IMR-90 (cell line): ENCODE measurements at regions of chr12 and their contacts with region 1.

Region 1: GRCh38 chr12:78470354-78471195 is 394.0 kb upstream of the SYT1 start:
- DNase-seq: peak; percentile 60
- ATAC-seq: peak; percentile 74
- H3K4me3 ChIP-seq: no peak overlapping the region
- H3K27ac ChIP-seq: no peak overlapping the region
- H3K4me1 ChIP-seq: no peaks in the 10 kb centered on the region
- H3K27me3 ChIP-seq: no peaks in the 10 kb centered on the region
- CTCF ChIP-seq: peak; percentile 70
- POLR2A ChIP-seq: no peak
- RAD21 ChIP-seq: peak; percentile 70

Region 2: DNA sequence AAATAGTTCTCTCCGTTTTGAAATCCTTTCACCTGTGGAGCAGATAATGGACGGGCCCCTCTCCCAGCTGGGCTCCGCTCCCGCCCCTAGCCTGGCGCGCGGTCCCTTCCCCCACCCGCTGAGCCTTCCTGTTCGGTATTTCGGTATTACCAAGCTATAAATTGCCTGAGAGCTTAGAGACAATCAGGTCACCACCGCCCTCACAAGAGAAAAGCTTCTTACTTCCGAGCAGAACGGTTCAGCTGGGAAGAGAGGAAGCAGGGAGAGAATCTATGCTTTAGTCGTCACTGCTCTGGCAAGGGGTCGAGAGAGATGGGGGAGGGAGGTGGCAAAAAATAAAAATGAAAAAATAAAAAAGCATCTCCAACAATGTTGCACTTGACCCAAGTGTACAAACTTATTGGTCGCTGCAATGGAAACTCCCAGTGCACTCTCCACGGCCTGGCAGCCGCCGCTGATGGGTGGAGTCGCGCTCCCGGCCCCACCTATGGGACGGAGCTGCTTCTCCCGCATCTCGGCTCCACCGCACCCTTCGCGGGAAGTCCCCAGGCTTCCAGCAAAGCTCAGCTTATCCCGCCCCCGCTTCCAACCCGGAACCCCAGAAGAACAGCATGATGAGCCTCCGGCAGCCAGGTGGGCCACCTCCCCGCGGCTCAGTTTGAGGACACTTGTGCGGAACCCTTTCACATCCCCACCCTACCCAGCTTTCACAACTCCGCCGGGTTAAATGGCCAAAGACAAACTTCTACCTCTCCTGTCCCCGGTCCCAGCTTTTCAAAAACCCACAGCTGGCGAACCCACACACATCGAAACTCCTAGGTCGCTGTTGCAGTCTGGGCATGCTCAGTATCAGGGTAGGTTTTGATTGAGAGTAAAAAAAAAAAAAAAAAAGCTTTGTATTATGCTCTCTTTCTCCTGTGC is 393.2 kb after region 1 on chr12:
- CTCF ChIA-PET with region 1: no interaction called
- POLR2A ChIA-PET with region 1: no interaction called
- dilution Hi-C with region 1: no loop called
- in situ Hi-C with region 1: no loop called
- intact Hi-C with region 1: loop called (anchors 5 kb)
- DNase-seq: peak; percentile 39
- ATAC-seq: peak; percentile 63
- H3K4me3 ChIP-seq: peak overlapping the region; percentile 57
- H3K27ac ChIP-seq: peak overlapping the region; percentile 5; the same call in 1 of the 2 replicates
- H3K4me1 ChIP-seq: no peaks in the 10 kb centered on the region
- H3K27me3 ChIP-seq: no peaks in the 10 kb centered on the region; the same call in 1 of the 2 replicates
- CTCF ChIP-seq: no peak
- POLR2A ChIP-seq: no peak
- RAD21 ChIP-seq: no peak

Region 3: GRCh38 chr12:79006306-79006705 is 535.7 kb after region 1 on chr12:
- CTCF ChIA-PET with region 1: no interaction called
- POLR2A ChIA-PET with region 1: no interaction called
- dilution Hi-C with region 1: no loop called
- in situ Hi-C with region 1: no loop called
- intact Hi-C with region 1: loop called (anchors 5 kb)
- DNase-seq: peak; percentile 21
- ATAC-seq: no peak
- H3K4me3 ChIP-seq: no peak overlapping the region
- H3K27ac ChIP-seq: no peak overlapping the region
- H3K4me1 ChIP-seq: no peaks in the 10 kb centered on the region
- H3K27me3 ChIP-seq: no peaks in the 10 kb centered on the region
- CTCF ChIP-seq: peak; percentile 51
- POLR2A ChIP-seq: no peak
- RAD21 ChIP-seq: peak; percentile 63

Region 4: GRCh38 chr12:79344855-79345847 is 874.6 kb after region 1 on chr12:
- CTCF ChIA-PET with region 1: no interaction called
- POLR2A ChIA-PET with region 1: no interaction called
- dilution Hi-C with region 1: no loop called
- in situ Hi-C with region 1: no loop called
- intact Hi-C with region 1: loop called (anchors 2 kb)
- DNase-seq: peak; percentile 50
- ATAC-seq: peak; percentile 86
- H3K4me3 ChIP-seq: no peak overlapping the region
- H3K27ac ChIP-seq: no peak overlapping the region
- H3K4me1 ChIP-seq: no peaks in the 10 kb centered on the region
- H3K27me3 ChIP-seq: no peaks in the 10 kb centered on the region; the same call in 1 of the 2 replicates
- CTCF ChIP-seq: peak; percentile 57
- POLR2A ChIP-seq: no peak
- RAD21 ChIP-seq: peak; percentile 78